AG04450 (cell line): ENCODE measurements at regions of chr11 and their contacts with region 1.

Region 1: DNA sequence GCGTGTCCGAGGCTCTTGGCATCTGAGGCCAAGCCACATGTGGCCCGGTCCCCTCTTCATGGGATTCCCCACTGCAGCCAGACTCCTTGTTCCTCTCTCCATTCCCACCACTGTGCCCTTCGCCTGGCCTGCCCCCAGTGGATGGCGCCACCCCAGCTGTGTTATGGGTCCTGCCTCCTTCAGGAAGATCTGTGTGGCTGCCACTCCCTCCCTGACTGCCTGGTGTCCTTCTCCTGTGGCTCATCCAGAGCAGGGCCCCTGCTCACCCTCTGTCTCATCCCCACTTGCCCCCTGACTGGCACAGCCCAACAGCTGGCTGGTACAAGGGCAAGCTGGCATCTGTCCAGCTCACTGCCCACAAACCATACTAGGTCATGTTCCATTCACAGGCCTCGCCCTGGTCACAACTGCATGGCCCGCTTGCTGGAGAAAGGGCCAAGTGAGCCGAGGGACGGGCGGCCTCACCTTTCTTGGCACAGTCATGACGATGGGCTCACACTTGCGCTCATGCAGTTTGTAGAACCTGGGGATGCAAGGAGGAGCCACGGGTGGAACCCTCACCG is 1.9 kb upstream of the PTPRCAP start:
- DNase-seq: no peak
- H3K4me3 ChIP-seq: no peak overlapping the region
- H3K27ac ChIP-seq: peak overlapping the region; percentile 11
- H3K27me3 ChIP-seq: no peaks in the 10 kb centered on the region
- CTCF ChIP-seq: peak; percentile 18; the same call in 1 of the 2 replicates

Region 2: DNA sequence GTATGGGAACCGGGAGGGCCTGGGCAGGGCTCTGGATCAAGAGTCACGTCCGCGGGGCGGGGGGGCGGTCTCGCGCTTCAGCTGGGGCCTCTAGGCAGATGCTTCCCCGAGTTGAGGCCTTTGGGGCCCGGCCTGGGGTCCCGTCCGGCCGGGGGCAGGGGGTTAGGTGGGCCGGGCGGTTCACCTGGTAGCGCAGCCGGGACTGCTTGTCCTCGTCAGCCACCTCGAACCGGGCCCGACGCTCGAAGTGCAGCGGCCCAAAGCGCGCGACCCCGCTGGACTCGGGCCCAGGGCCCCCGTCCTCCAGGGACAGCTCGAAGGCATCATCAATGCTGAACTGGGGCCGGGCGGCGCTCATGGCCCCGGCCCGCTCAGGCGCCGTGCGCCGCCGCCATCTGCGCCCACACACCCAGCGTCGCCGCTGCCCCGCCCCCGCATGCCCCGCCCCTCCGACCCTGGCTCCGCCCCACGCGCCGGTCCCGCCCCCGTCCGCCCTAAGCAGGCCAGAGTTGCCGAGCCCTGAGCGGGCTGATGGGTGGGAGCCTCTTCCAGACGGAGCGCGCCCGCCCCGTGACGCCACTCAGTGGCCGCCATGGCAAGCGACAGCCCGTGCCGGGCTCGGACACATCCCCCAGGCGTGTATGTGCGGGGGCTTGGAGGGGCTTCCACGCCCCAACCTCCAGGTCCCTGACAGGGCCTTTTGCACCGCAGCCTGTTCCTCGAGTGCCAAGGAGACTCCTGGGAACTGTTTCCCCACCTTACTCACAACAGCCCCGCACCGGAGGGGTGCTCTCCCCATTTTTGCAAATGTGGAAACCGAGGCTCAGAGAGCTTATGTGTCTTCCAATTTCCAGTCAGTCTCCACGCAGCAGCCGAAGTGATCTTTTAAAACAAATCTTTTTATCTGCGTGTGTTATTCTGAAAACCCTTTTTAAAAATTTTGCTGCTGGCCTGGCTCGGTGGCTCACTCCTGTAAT is 29.7 kb after region 1 on chr11 and contains the start of gene TMEM134:
- CTCF ChIA-PET with region 1: interaction called, 10 read pairs
- POLR2A ChIA-PET with region 1: interaction called, 4 read pairs
- DNase-seq: peak; percentile 69
- H3K4me3 ChIP-seq: peak within 1 kb of the TSS; percentile 71
- H3K27ac ChIP-seq: peak within 1 kb of the TSS; percentile 65
- H3K27me3 ChIP-seq: peaks cover 4% of the 10 kb centered on the region
- CTCF ChIP-seq: peak; percentile 37
- polyA plus RNA-seq, gene TMEM134: 14.7 and 22.5 TPM in 2 replicates